Mammary epithelial cell (primary cell): ENCODE measurements at regions of chr15 and their contacts with region 1.

Region 1: GRCh38 chr15:78979456-78980320 is 34.8 kb upstream of the CTSH start:
- DNase-seq: peak; percentile 80
- H3K4me3 ChIP-seq: no peak overlapping the region
- H3K27ac ChIP-seq: no peak overlapping the region
- H3K4me1 ChIP-seq: peaks cover 5% of the 10 kb centered on the region
- H3K27me3 ChIP-seq: no peaks in the 10 kb centered on the region
- CTCF ChIP-seq: peak; percentile 83 to 84

Region 2: GRCh38 chr15:78944669-78945407 is 34.9 kb before region 1 on chr15 and contains the start of gene CTSH:
- CTCF ChIA-PET with region 1: no interaction called
- dilution Hi-C with region 1: no loop called
- in situ Hi-C with region 1: no loop called
- intact Hi-C with region 1: loop called (anchors 2 kb)
- DNase-seq: peak; percentile 58
- H3K4me3 ChIP-seq: peak within 1 kb of the TSS; percentile 50 to 68 (median 59)
- H3K27ac ChIP-seq: no peak within 1 kb of the TSS
- H3K4me1 ChIP-seq: peaks cover 12% of the 10 kb centered on the region
- H3K27me3 ChIP-seq: no peaks in the 10 kb centered on the region
- CTCF ChIP-seq: no peak
- total RNA-seq, gene CTSH: 22.6 to 74.2 TPM

Region 3: GRCh38 chr15:79007066-79007465 is 27.4 kb after region 1 on chr15:
- CTCF ChIA-PET with region 1: no interaction called
- dilution Hi-C with region 1: no loop called
- in situ Hi-C with region 1: no loop called
- intact Hi-C with region 1: no loop called
- DNase-seq: no peak
- H3K4me3 ChIP-seq: no peak overlapping the region
- H3K27ac ChIP-seq: no peak overlapping the region
- H3K4me1 ChIP-seq: peaks cover 27% of the 10 kb centered on the region
- H3K27me3 ChIP-seq: no peaks in the 10 kb centered on the region
- CTCF ChIP-seq: peak; percentile 30 to 38

Region 4: GRCh38 chr15:79028411-79028964 is 48.8 kb after region 1 on chr15:
- CTCF ChIA-PET with region 1: no interaction called
- dilution Hi-C with region 1: no loop called
- in situ Hi-C with region 1: no loop called
- intact Hi-C with region 1: loop called (anchors 1 kb)
- DNase-seq: peak; percentile 25
- H3K4me3 ChIP-seq: no peak overlapping the region
- H3K27ac ChIP-seq: no peak overlapping the region
- H3K4me1 ChIP-seq: no peaks in the 10 kb centered on the region
- H3K27me3 ChIP-seq: no peaks in the 10 kb centered on the region
- CTCF ChIP-seq: peak; percentile 91 to 92

Region 5: GRCh38 chr15:79091204-79091867 is 111.6 kb after region 1 on chr15:
- CTCF ChIA-PET with region 1: no interaction called
- dilution Hi-C with region 1: no loop called
- in situ Hi-C with region 1: no loop called
- intact Hi-C with region 1: no loop called
- DNase-seq: peak; percentile 22
- H3K4me3 ChIP-seq: no peak overlapping the region
- H3K27ac ChIP-seq: no peak overlapping the region
- H3K4me1 ChIP-seq: peaks cover 6% of the 10 kb centered on the region
- H3K27me3 ChIP-seq: peaks cover 26% of the 10 kb centered on the region
- CTCF ChIP-seq: no peak

Region 6: GRCh38 chr15:79184465-79184892 is 204.8 kb after region 1 on chr15:
- CTCF ChIA-PET with region 1: no interaction called
- dilution Hi-C with region 1: no loop called
- in situ Hi-C with region 1: no loop called
- intact Hi-C with region 1: loop called (anchors 2 kb)
- DNase-seq: peak; percentile 42
- H3K4me3 ChIP-seq: no peak overlapping the region
- H3K27ac ChIP-seq: no peak overlapping the region
- H3K4me1 ChIP-seq: peaks cover 2% of the 10 kb centered on the region
- H3K27me3 ChIP-seq: no peaks in the 10 kb centered on the region
- CTCF ChIP-seq: peak; percentile 97